GM10248 (cell line): ENCODE measurements at regions of chr21 and their contacts with region 1.

Region 1: GRCh38 chr21:25487046-25487594 is 120.2 kb downstream of the MRPL39 start:
- DNase-seq: peak; percentile 28
- CTCF ChIP-seq: no peak

Region 2: GRCh38 chr21:24395320-24395923 is 1091.7 kb before region 1 on chr21:
- CTCF ChIA-PET with region 1: no interaction called
- POLR2A ChIA-PET with region 1: no interaction called
- DNase-seq: no peak
- CTCF ChIP-seq: no peak

Region 3: GRCh38 chr21:25191141-25191540 is 296.0 kb before region 1 on chr21:
- CTCF ChIA-PET with region 1: no interaction called
- POLR2A ChIA-PET with region 1: no interaction called
- DNase-seq: peak; percentile 25
- CTCF ChIP-seq: no peak

Region 4: DNA sequence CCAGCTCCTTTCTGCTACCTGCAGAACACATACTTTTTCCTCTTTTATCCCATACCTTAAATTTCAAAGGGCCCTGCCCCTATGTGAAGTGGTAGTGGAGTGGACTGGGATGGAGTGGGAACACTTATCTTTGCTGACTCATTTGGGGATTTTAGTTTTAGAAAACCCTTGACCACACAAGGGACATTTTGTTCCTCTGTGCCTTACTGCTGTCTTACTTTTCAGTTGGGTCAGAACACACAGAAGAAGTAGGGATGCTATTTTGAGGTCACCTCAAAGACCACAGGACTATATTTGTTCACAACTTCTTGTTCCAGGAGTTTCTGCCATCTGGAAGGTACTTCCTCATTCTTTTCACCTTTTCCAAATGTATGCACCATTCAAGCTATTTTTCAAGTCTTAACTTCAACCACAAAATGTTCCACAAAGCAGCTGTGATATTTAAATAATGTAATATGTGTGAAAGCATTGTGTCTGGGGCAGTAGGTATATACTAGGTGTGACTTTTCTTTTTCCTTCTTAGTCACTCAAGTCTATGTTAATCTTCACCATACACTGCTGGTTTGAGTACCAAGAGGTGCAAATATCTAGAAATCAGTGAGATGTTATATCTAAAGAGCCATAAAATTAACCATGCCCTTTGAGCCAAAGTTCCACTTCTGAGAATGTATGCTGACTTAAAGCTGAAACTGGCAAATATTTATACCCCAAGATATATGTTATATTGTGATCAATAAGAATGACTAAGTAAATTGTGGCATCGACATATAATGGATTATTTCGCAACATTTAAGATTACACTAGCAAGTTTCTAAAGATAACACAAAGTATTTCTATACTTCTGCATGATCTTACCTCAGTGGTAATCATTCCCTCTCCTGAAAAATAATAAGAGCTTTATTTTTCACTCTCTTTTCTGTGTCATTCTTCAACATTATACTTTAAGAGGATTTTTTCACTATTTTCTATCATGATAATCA is 188.3 kb before region 1 on chr21:
- CTCF ChIA-PET with region 1: no interaction called
- POLR2A ChIA-PET with region 1: no interaction called
- DNase-seq: peak; percentile 8
- CTCF ChIP-seq: no peak

Region 5: GRCh38 chr21:25421327-25422028 is 65.6 kb before region 1 on chr21:
- CTCF ChIA-PET with region 1: interaction called, 29 read pairs
- POLR2A ChIA-PET with region 1: no interaction called
- DNase-seq: peak; percentile 29
- CTCF ChIP-seq: peak; percentile 73

Region 6: DNA sequence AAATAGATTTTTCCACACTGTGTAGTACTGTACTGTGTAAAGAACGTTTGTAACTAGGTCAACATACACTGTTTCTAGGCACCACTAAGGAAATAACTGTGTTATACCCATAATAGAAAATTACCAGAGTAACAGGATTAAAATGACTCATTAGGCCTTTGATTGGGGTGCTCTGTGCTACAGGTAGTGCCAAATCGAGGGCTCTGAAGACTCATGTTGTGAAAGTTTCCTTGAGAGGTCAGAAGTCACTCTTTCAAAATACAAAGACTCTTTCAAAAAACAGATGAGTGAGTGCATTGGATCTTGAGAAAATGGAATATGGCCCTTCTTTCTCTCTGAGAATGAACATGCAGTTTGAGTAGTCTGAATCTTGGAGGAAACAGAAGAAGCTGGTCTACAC is 22.8 kb before region 1 on chr21:
- CTCF ChIA-PET with region 1: interaction called, 18 read pairs
- POLR2A ChIA-PET with region 1: no interaction called
- DNase-seq: no peak
- CTCF ChIP-seq: no peak

Region 7: GRCh38 chr21:25501462-25501861 is 14.3 kb after region 1 on chr21:
- CTCF ChIA-PET with region 1: interaction called, 43 read pairs
- POLR2A ChIA-PET with region 1: interaction called, 4 read pairs
- DNase-seq: no peak
- CTCF ChIP-seq: no peak

Region 8: DNA sequence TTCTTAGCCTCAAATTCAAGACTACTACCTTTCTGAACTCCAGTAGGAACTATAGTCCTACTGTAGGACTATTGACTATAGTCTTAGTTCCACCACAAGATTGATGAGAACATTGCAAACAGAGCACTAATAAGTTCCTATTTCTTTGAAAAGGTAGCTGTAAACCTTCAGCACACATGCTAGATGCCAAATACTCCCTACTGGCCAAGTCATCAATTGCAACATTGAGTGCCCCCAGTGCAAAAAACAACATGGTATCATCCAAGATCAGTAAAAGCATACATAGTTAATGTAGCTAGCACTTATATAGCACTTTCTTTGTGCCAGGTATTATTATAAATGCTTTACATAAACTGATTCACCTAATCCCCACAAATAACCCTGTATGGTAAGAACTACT is 20.4 kb after region 1 on chr21:
- CTCF ChIA-PET with region 1: interaction called, 43 read pairs
- POLR2A ChIA-PET with region 1: interaction called, 4 read pairs
- DNase-seq: no peak
- CTCF ChIP-seq: peak; percentile 39